Endothelial cell of umbilical vein (primary cell): ENCODE measurements at regions of chr1 and their contacts with region 1.

Region 1: DNA sequence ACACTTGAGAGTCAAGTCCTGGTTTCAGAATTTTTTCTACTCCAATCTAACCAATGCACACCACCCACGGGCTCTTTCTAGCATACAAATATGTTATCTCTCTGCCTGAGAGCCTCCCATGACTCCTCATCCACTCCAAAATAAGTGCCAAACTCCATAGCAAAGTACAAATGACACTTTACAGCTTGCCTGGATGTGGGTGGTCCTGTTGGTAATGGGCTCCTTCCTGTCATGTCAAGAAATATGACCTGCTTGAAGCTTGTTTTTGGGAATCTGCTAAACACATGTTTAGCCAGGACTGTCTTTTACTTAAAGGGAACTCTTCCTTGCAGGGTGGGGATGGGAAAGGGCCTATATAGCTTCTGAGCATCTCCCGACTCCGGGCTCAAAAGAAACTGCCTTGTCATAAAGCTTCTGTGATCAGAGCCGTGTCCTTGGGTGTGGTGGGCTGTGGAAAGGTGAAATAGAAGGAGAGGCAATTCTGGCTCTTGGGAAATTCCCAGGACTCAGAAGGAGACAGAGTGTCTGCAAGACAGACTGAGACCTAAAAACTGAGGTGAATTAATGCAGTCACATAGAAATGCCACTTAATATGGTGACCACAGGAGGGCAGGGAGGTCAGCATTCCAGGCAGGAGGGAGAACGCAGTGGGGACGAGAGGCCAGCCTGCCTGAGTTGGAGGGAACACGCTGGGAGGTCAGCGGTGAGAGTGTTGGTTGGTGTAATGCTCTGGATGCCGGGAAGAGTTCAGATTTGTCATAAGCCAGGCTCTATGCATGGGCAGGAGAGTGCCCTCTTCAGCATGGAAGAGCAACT is 6.1 kb upstream of the IGFN1 start:
- DNase-seq: peak; percentile 38
- H3K4me3 ChIP-seq: no peak overlapping the region
- H3K27ac ChIP-seq: no peak overlapping the region
- H3K4me1 ChIP-seq: no peaks in the 10 kb centered on the region
- H3K27me3 ChIP-seq: peaks cover 4 to 19% of the 10 kb centered on the region in 2 experiments
- CTCF ChIP-seq: peak in 1 of 2 donors; percentile 68
- POLR2A ChIP-seq: no peak

Region 2: DNA sequence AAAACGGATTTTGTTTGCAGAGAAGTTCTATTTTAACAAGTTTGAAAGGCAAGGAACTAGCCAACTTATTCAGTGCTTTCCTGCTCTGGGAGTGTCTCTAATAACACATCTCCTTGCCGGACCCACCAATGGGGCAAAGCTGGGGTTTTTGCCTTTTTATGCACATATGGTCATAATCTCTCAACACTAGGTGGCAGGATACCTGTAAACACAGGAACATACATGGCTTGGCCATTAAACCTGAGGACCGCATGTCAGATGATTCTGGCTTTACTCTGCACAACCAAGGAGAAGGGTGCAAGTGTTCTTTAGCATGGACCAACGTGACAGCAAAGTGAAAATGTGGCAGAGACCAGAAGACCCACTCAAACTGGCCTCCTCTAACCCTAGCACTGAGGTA is 35.1 kb before region 1 on chr1:
- CTCF ChIA-PET with region 1: interaction called, 5 read pairs
- POLR2A ChIA-PET with region 1: no interaction called
- dilution Hi-C with region 1: no loop called
- intact Hi-C with region 1: loop called (anchors 1 kb)
- DNase-seq: peak; percentile 29
- H3K4me3 ChIP-seq: no peak overlapping the region
- H3K27ac ChIP-seq: no peak overlapping the region
- H3K4me1 ChIP-seq: peaks cover 5% of the 10 kb centered on the region
- H3K27me3 ChIP-seq: no peaks in the 10 kb centered on the region
- CTCF ChIP-seq: peak in 1 of 2 donors; percentile 30
- POLR2A ChIP-seq: no peak

Region 3: DNA sequence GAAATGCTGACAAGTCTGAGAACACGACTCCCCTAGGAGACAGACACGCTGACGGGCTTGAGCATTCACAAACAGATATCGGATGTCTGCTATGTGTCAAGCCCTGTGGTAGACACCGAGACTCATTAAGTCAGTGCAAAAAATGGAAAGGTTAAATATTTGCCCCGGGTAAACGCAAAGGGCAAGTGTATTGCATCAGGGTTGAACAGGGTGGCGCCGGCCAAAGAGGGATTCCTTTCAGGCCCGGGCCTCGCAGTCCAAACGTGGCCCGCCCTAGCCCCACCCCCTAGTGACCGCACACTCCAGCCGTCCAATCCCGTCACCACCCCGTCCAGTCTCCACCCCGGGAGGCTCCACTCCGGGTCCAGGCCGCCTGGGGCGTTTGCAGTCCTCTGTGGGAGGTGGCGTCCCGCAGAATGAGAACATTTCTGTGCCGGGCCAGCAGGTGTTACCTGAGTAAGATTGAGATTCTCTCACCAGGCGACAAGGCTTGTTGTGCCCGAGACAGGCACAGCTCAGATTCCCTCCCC is 13.9 kb before region 1 on chr1:
- CTCF ChIA-PET with region 1: interaction called, 11 read pairs
- POLR2A ChIA-PET with region 1: no interaction called
- dilution Hi-C with region 1: no loop called
- intact Hi-C with region 1: no loop called
- DNase-seq: peak; percentile 82
- H3K4me3 ChIP-seq: peak overlapping the region; percentile 51 to 57 (median 55)
- H3K27ac ChIP-seq: no peak overlapping the region
- H3K4me1 ChIP-seq: peaks cover 9% of the 10 kb centered on the region
- H3K27me3 ChIP-seq: peaks cover 9 to 11% of the 10 kb centered on the region in 2 experiments
- CTCF ChIP-seq: no peak
- POLR2A ChIP-seq: no peak